RWPE1 (cell line): ENCODE measurements at regions of chrX and their contacts with region 1.

Region 1: DNA sequence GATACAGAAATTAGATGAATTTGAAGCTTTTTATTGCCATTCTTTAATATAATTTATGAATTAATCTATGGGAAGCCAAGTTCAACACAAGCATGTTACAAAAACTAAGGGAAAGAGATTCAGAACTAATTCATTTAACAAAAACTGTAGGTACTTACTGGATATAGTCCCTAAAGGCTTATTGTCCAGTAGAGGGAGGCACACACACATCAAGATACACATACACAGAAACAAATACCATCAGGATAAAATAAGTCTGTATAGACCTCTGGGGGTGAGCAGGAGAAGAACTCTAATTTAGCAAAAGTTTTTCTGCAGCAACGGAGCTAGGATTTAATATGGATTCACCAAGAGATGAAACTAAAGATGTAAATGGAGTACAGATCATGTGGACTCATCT is 83.0 kb upstream of the IL13RA1 start:
- DNase-seq: peak; percentile 18
- H3K27ac ChIP-seq: no peak overlapping the region
- CTCF ChIP-seq: no peak

Region 2: GRCh38 chrX:118271770-118272169 is 372.6 kb before region 1 on chrX:
- CTCF ChIA-PET with region 1: no interaction called
- POLR2A ChIA-PET with region 1: no interaction called
- DNase-seq: no peak
- H3K27ac ChIP-seq: no peak overlapping the region
- CTCF ChIP-seq: no peak

Region 3: GRCh38 chrX:118807151-118808017 is 163.0 kb after region 1 on chrX:
- CTCF ChIA-PET with region 1: interaction called, 13 read pairs
- POLR2A ChIA-PET with region 1: no interaction called
- DNase-seq: no peak
- H3K27ac ChIP-seq: no peak overlapping the region
- CTCF ChIP-seq: peak; percentile 55